SK-N-SH (cell line): ENCODE measurements at regions of chr20 and their contacts with region 1.

Region 1: DNA sequence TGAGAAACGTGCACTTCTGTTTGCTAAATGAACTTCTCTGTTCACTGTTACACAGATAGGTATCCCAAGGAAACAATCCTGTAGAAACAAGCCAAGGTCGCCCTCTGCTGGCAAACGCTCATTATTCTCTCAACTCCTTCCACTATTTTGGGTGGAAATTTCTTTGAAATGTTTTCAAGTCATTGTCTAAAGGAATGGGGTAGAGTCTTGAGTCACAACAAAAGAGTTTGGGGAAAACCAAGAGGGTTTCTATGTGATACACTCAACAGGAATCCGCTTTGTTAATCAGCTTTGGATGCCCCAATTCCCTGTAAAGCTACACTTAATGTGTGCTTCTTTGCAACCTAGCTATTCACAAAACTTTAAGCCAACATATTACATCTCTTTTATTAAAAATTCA is 4.6 kb upstream of the RAE1 start:
- DNase-seq: peak; percentile 65
- H3K4me3 ChIP-seq: peak overlapping the region in 1 of 2 experiments; percentile 24; a peak in 1 of 4 replicates
- H3K27ac ChIP-seq: no peak overlapping the region
- H3K4me1 ChIP-seq: no peaks in the 10 kb centered on the region; a peak in 1 of 4 replicates
- H3K27me3 ChIP-seq: no peaks in the 10 kb centered on the region; the same call in 1 of the 2 replicates
- CTCF ChIP-seq: peak; percentile 89
- EP300 ChIP-seq: no peak
- RAD21 ChIP-seq: peak; percentile 95

Region 2: GRCh38 chr20:57089691-57090150 is 256.8 kb before region 1 on chr20:
- CTCF ChIA-PET with region 1: interaction called, 187 read pairs
- POLR2A ChIA-PET with region 1: no interaction called
- DNase-seq: peak; percentile 92
- H3K4me3 ChIP-seq: peak overlapping the region in 1 of 2 experiments; percentile 37; a peak in 1 of 4 replicates
- H3K27ac ChIP-seq: no peak overlapping the region
- H3K4me1 ChIP-seq: peaks cover 0 to 7% of the 10 kb centered on the region in 2 experiments; a peak in 1 of 4 replicates
- H3K27me3 ChIP-seq: no peaks in the 10 kb centered on the region
- CTCF ChIP-seq: peak; percentile 78
- EP300 ChIP-seq: no peak
- RAD21 ChIP-seq: peak; percentile 91

Region 3: GRCh38 chr20:57259121-57259937 is 87.1 kb before region 1 on chr20:
- CTCF ChIA-PET with region 1: interaction called, 10 read pairs
- POLR2A ChIA-PET with region 1: no interaction called
- DNase-seq: no peak
- H3K4me3 ChIP-seq: peak overlapping the region in 1 of 2 experiments; percentile 14; a peak in 1 of 4 replicates
- H3K27ac ChIP-seq: no peak overlapping the region
- H3K4me1 ChIP-seq: peaks cover 4 to 19% of the 10 kb centered on the region in 2 experiments; a peak in 3 of 4 replicates
- H3K27me3 ChIP-seq: peaks cover 5% of the 10 kb centered on the region; the same call in 1 of the 2 replicates
- CTCF ChIP-seq: no peak
- EP300 ChIP-seq: 0 out of 4 replicates have a peak, but pooled peaks of 1 of the 2 experiments have one; percentile 4
- RAD21 ChIP-seq: no peak

Region 4: DNA sequence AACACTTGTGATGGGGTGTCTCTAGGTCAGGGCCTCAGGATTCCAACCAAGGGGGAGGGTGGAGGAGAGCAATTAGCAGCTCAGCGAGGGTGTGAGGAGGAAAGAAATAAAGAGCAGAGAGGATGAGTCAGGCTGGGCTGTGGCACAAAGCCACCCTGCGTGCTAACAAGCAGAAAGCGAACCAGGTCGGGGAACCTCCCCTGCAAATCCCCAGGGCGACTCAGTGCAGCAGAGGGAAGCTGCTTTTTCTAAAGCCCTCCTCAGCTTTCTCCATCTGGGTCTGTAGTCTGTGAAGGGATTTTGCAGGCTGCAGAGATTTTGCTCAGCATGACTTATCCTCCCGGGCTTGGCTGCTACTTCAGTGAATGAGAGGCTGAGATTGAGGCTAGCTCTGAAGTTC is 23.4 kb before region 1 on chr20:
- CTCF ChIA-PET with region 1: interaction called, 76 read pairs
- POLR2A ChIA-PET with region 1: no interaction called
- DNase-seq: no peak
- H3K4me3 ChIP-seq: no peak overlapping the region
- H3K27ac ChIP-seq: no peak overlapping the region
- H3K4me1 ChIP-seq: peaks cover 0 to 6% of the 10 kb centered on the region in 2 experiments; a peak in 1 of 4 replicates
- H3K27me3 ChIP-seq: 0 out of 2 replicates have a peak, but pooled peaks cover 3% of the 10 kb centered on the region
- CTCF ChIP-seq: no peak
- EP300 ChIP-seq: no peak
- RAD21 ChIP-seq: no peak

Region 5: GRCh38 chr20:57329608-57330221 is 16.8 kb before region 1 on chr20 and contains the start of gene SPO11:
- CTCF ChIA-PET with region 1: interaction called, 76 read pairs
- POLR2A ChIA-PET with region 1: no interaction called
- DNase-seq: peak; percentile 37
- H3K4me3 ChIP-seq: no peak within 1 kb of the TSS; a peak in 1 of 4 replicates
- H3K27ac ChIP-seq: no peak within 1 kb of the TSS
- H3K4me1 ChIP-seq: peaks cover 0 to 6% of the 10 kb centered on the region in 2 experiments; a peak in 1 of 4 replicates
- H3K27me3 ChIP-seq: no peaks in the 10 kb centered on the region
- CTCF ChIP-seq: no peak
- EP300 ChIP-seq: no peak
- RAD21 ChIP-seq: peak; percentile 27; the same call in 1 of the 2 replicates
- polyA plus RNA-seq, gene SPO11: not detected in 2 replicates

Region 6: DNA sequence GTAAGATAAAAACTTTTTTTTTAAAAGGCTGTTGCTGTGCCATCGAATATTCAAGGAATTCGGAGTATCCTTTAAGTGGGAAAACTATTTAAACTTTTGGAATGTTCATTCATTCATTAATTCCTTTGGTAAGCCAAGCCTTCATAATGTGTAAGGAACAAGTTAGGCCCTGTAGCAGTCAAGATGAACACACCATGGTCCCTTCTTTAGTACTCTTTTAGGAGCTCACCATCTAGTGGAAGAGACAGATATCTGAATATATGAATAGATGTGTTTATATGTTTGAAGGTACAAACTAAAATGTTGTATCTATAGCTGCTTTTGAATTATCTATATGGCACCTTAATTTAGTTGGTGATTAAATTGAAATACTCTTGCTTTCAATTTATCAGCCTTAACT is 11.1 kb before region 1 on chr20:
- CTCF ChIA-PET with region 1: interaction called, 76 read pairs
- POLR2A ChIA-PET with region 1: no interaction called
- DNase-seq: no peak
- H3K4me3 ChIP-seq: no peak overlapping the region
- H3K27ac ChIP-seq: no peak overlapping the region
- H3K4me1 ChIP-seq: no peaks in the 10 kb centered on the region
- H3K27me3 ChIP-seq: peaks cover 10% of the 10 kb centered on the region; the same call in 1 of the 2 replicates
- CTCF ChIP-seq: no peak
- EP300 ChIP-seq: no peak
- RAD21 ChIP-seq: peak; percentile 67